ENCODE measurements at regions of chr10 and their contacts with region 1.

Region 1: DNA sequence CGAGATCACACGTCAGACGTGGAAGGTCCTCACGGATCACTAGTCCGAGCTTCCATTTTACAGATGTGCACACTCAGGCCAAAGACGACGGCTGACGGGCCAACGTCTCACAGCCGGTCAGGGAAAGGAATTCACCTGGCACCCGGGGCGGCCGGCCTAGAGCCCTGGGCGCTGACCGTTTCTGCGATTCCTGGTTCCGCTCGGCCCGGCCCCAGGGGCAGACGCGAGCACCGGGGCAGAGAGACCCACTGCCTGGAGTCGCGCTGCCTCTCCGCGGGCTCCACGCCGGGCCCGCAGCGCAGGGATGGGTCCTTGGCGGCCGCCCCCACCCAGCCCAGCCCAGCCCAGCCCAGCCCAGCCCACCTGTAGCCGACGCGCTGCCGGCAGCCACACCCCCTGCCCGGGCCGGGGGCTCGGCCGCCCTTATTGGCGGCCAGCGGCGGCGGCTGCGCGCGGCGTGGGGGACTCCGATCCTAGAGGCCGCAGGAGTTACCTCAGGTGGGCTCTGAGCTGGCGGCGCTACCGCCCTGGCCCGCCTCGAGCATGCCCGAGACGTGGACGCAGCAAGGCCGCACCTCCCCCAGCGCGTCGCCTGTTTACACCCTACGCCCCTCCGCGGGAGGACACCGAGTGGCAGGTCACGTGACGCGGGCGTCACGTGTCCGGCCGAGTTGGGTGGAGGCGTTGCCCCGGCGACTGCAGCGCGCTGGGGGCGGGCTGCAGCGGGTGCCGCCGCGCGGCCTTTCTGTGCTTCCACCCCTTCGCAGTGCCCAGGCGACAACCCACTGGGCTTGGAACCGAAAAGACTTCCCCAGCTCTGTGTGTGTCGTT is 78.1 kb downstream of the ZFAND4 start:
- DNase-seq: peak; percentile 84 to 95 (median 90)
- ATAC-seq: peak; percentile 84 to 90
- H3K4me3 Mint-ChIP-seq: peak overlapping the region; percentile 71 to 97 (median 94)
- H3K27ac Mint-ChIP-seq: peak overlapping the region; percentile 78 to 98 (median 94)
- H3K4me1 Mint-ChIP-seq: peaks cover 20 to 45% (median 41%) of the 10 kb centered on the region in 4 donors
- H3K27me3 Mint-ChIP-seq: peaks cover 2 to 8% (median 5%) of the 10 kb centered on the region in 5 donors

Region 2: GRCh38 chr10:45553155-45553554 is 41.3 kb before region 1 on chr10:
- POLR2A ChIA-PET with region 1: no interaction called
- DNase-seq: no peak
- ATAC-seq: no peak
- H3K4me3 Mint-ChIP-seq: no peak overlapping the region
- H3K27ac Mint-ChIP-seq: peak overlapping the region in 2 of 10 donors; percentile 7 to 37
- H3K4me1 Mint-ChIP-seq: peaks cover 21 to 49% (median 40%) of the 10 kb centered on the region in 4 donors
- H3K27me3 Mint-ChIP-seq: no peaks in the 10 kb centered on the region

Region 3: DNA sequence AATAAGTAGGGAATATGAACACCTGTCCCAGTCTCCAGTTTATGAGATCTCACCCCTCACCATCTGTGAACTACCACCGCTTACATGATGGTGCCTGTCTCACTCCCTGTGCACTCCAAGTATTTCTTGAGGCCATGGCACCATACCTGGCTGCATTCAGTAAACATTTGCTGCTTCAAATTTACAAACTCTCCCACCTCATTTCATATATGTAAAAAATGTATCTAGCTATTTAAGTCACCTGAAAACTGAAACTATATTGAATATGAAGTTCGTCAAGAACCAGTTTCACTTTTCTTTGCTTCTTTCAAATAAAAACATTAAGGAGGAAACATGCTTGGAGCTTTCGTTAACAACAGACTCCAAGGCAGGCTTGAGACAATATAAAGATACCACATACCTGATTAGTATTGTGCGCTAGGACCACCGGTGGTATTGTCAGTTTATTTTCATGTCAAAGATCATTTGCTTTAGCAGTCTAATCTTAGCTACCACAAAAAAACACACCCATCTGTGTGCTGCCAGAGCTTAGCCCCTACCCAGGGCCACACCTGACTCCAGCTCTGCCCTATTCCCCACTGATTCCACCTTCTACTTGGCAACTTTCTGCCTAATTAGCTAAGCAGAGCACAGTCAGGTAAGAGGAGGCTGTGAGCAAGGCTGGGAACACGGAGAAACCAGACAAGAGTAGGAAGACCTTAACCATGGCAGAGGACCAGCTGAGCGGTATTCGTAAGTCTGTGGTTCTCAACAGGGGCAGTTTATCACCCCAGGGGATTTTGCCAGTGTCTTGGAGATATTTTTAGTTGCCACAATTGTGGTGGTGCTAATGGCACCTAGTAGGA is 13.9 kb before region 1 on chr10:
- POLR2A ChIA-PET with region 1: interaction called, 16 read pairs
- DNase-seq: peak in 3 of 10 donors; percentile 30 to 47 (median 33)
- ATAC-seq: peak; percentile 65 to 76
- H3K4me3 Mint-ChIP-seq: peak overlapping the region; percentile 91 to 97 (median 93)
- H3K27ac Mint-ChIP-seq: peak overlapping the region; percentile 93 to 97 (median 96)
- H3K4me1 Mint-ChIP-seq: peaks cover 19 to 47% (median 44%) of the 10 kb centered on the region in 4 donors
- H3K27me3 Mint-ChIP-seq: no peaks in the 10 kb centered on the region

Region 4: GRCh38 chr10:45646384-45647050 is 52.0 kb after region 1 on chr10:
- POLR2A ChIA-PET with region 1: no interaction called
- DNase-seq: no peak
- ATAC-seq: no peak
- H3K4me3 Mint-ChIP-seq: no peak overlapping the region
- H3K27ac Mint-ChIP-seq: peak overlapping the region in 3 of 10 donors; percentile 20 to 71 (median 23)
- H3K4me1 Mint-ChIP-seq: peaks cover 0 to 2% (median under 1%) of the 10 kb centered on the region in 4 donors
- H3K27me3 Mint-ChIP-seq: no peaks in the 10 kb centered on the region